ENCODE measurements at regions of chr9 and their contacts with region 1.

Region 1: DNA sequence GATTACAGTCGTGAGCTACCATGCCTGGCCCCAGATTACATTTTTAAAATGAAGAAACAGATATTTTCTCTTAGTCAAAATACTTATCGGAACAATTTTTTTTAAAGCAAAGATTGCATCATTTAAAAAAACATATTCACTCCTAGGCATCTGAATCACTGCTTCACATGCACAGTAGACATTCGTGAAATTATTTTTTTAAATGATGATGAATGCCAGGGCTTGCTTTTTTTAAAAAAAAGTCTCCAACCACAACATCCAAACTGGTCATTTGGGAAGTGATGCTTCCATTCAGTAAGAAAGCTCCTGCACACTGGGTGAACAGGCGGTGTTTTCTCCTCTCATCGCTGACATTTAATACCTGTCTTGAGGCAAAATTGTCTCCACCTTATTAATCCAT is 223.0 kb upstream of the DMRT1 start:
- DNase-seq: no peak
- H3K4me3 ChIP-seq: no peak overlapping the region
- H3K27ac ChIP-seq: no peak overlapping the region
- H3K4me1 ChIP-seq: no peaks in the 10 kb centered on the region
- H3K27me3 ChIP-seq: no peaks in the 10 kb centered on the region
- CTCF ChIP-seq: no peak
- POLR2A ChIP-seq: no peak

Region 2: DNA sequence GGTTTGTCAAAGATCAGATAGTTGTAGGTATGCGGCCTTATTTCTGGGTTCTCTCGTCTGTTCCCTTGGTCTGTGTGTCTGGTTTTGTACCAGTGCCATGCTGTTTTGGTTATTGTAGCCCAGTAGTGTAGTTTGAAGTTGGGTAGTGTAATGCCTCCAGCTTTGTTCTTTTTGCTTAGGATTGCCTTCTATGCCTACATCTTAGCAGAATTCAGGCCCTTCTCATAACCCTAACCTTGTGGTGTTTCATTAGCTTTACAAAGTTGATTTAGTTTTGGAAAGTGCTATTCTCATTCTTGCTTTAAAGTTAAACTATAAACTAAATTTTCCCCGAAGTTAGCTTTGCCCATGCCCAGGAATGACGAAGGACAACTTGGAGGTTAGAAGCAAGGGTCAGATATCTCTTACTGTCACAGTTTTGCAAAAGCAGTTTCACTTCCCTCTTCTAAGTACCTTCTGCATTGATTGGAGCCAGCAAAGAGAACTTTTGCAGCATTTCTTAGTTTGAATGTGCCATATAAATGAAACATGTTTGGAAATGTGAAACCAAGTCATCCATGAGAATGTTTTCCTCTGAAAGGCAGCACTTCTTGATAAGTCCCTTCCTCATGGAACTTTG is 51.2 kb before region 1 on chr9:
- intact Hi-C with region 1: no loop called
- DNase-seq: no peak
- H3K4me3 ChIP-seq: no peak overlapping the region
- H3K27ac ChIP-seq: no peak overlapping the region
- H3K4me1 ChIP-seq: peaks cover 25% of the 10 kb centered on the region
- H3K27me3 ChIP-seq: no peaks in the 10 kb centered on the region
- CTCF ChIP-seq: no peak
- POLR2A ChIP-seq: no peak

Region 3: DNA sequence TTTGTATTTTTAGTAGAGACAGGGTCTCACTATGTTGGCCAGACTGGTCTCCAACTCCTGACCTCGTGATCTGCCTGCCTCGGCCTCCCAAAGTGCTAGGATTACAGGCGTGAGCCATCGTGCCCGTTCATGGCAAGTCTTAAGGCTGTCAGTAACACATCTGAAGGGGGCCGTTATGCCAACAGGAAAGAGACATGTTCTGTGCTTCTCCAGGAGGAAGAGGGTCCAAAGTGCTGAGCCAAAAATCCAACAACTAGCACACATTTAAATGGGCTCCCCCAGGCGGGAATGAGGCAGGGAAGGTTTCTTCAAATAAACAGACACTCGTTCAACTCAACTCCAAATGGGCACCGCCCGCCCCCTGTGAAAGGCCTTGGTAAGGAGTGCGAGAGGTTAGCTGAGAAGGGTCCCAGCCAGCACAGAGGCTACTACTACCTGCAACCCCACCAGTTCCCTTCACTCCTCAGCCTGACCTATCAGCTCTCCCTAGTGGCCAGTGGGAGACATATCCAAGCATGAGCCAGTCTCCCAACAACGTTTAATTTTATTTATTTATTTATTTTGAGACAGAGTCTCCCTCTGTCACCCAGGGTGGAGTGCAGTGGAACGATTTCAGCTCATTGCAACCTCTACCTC is 138.9 kb after region 1 on chr9:
- intact Hi-C with region 1: loop called (anchors 5 kb)
- DNase-seq: peak; percentile 57
- H3K4me3 ChIP-seq: no peak overlapping the region
- H3K27ac ChIP-seq: no peak overlapping the region
- H3K4me1 ChIP-seq: no peaks in the 10 kb centered on the region
- H3K27me3 ChIP-seq: no peaks in the 10 kb centered on the region
- CTCF ChIP-seq: peak in 2 of 3 experiments; percentile 52 to 53
- POLR2A ChIP-seq: no peak

Region 4: DNA sequence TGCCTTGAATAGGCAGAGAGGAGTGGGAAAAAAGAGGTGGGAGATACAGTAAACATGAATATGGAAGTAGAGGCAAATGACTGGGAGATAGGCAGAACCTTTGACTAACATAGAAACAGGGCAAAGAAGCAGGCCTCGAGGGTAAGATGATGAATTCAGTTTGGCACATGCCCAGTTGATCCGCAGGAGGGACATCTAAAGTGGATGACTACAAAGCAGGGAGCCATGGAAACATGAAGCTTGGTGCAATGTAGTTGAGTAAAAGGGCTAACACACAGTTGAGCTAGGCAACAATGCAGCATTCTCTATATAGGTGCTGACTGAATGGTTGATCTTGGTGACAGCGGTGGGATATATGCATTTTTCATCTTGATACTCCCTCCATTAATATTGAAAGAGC is 685.5 kb after region 1 on chr9:
- intact Hi-C with region 1: no loop called
- DNase-seq: no peak
- H3K4me3 ChIP-seq: no peak overlapping the region
- H3K27ac ChIP-seq: no peak overlapping the region
- H3K4me1 ChIP-seq: no peaks in the 10 kb centered on the region
- H3K27me3 ChIP-seq: no peaks in the 10 kb centered on the region
- CTCF ChIP-seq: no peak
- POLR2A ChIP-seq: no peak

Measured in testis (tissue), 5 donors.